ENCODE measurements at regions of chr21 and their contacts with region 1.

Region 1: GRCh38 chr21:37463083-37463801 is 96.7 kb downstream of the DYRK1A start:
- DNase-seq: peak; percentile 52
- H3K4me3 Mint-ChIP-seq: peak overlapping the region; percentile 70
- H3K27ac Mint-ChIP-seq: peak overlapping the region; percentile 18
- H3K4me1 Mint-ChIP-seq: peaks cover 40% of the 10 kb centered on the region
- H3K27me3 Mint-ChIP-seq: no peaks in the 10 kb centered on the region
- CTCF ChIP-seq: peak; percentile 24

Region 2: DNA sequence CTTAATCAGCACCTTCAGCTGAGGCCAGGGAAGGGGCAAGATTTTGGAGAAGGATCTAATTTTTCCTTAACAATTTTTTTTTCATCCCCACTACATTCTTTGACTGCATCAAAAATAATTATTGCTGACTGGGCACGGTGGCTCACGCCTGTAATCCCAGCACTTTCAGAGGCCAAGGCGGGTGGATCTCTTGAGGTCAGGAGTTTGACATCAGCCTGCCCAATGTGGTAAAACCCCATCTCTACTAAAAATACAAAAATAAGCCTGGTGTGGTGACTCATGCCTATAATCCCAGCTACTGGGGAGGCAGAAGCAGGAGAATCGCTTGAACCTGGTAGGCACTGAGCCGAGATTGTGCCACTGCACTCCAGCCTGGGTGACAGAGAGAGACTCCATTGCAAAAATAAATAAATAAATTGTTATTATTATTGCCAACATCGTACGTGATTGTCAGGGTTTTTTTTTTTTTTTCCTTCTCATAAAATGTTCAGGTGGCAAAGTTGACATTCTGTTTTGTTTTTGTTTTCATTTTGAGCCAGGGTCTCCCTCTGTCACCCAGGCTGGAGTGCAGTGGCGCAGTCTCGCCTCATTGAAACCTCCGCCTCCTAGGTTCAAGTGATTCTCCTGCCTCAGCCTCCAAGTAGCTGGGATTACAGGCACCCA is 1180.5 kb before region 1 on chr21:
- CTCF ChIA-PET with region 1: no interaction called
- POLR2A ChIA-PET with region 1: no interaction called
- intact Hi-C with region 1: no loop called
- DNase-seq: peak; percentile 3
- H3K4me3 Mint-ChIP-seq: no peak overlapping the region
- H3K27ac Mint-ChIP-seq: no peak overlapping the region
- H3K4me1 Mint-ChIP-seq: no peaks in the 10 kb centered on the region
- H3K27me3 Mint-ChIP-seq: no peaks in the 10 kb centered on the region
- CTCF ChIP-seq: no peak

Region 3: DNA sequence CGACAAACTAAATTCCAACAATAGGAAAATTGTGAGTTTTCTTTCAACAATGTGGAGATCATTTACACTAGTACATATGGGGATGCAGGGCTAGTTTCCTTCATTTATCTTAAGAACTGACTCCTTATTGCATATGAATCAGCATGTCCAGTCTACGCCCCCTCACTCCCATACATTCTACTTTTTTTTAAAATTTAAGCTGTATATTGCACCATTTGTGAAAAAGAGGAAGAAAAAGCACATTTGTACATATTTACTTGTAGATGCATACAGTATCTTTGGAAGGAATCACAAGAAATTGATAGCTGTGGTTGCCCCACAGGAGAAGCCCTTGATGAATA is 212.0 kb before region 1 on chr21:
- CTCF ChIA-PET with region 1: no interaction called
- POLR2A ChIA-PET with region 1: interaction called, 3 read pairs
- intact Hi-C with region 1: loop called (anchors 2 kb)
- DNase-seq: no peak
- H3K4me3 Mint-ChIP-seq: no peak overlapping the region
- H3K27ac Mint-ChIP-seq: no peak overlapping the region
- H3K4me1 Mint-ChIP-seq: peaks cover 17% of the 10 kb centered on the region
- H3K27me3 Mint-ChIP-seq: no peaks in the 10 kb centered on the region
- CTCF ChIP-seq: no peak

Region 4: DNA sequence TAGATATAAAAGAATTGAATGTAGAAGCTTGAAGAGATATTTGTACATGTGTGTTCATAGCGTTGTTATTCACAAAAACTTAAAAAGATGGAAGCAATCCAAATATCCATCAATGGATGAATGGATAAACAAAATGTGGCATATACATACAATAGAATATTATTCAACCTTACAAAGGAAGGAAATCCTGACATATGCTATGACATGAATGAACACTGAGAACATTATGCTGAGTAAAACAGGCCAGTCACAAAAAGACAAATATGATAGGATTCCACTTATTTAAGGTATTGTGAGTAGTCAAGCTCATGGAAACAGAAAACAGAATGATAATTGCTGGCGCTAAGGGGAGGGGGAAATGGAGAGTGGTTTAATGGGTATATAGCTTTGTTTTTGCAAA is 143.7 kb before region 1 on chr21:
- CTCF ChIA-PET with region 1: no interaction called
- POLR2A ChIA-PET with region 1: no interaction called
- intact Hi-C with region 1: no loop called
- DNase-seq: no peak
- H3K4me3 Mint-ChIP-seq: no peak overlapping the region
- H3K27ac Mint-ChIP-seq: no peak overlapping the region
- H3K4me1 Mint-ChIP-seq: no peaks in the 10 kb centered on the region
- H3K27me3 Mint-ChIP-seq: peaks cover 8% of the 10 kb centered on the region
- CTCF ChIP-seq: no peak

Region 5: DNA sequence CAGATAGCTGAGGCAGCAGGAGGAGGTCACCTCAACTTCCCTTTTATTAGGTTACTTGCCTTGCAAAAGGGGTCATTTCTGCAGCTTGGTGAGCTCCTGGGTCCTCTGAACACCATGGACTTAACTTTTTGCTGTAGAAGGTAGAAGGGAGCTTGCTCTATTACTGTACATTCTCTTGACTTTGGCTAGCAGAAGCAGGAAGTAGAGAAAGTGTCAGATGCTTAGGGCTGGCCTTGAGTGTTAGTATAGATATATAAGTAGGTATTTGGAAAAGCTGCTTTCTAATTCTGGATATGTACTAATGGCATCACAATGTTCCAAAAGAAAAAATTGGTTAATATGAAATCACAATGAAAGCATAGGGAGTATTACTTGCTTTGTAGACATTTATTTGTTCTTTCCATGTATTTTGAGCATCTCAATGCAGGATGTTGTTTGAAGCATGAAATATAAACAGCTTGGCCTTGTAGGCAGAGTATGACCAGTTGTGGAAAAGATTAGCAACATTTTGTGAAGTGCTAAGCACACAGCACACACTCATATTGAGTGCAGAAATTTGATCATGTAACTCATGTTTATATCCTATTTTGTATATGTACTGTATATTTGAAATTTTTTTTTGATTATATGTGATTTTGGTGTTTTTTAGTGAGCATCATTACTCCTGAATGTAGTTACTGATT is 12.1 kb after region 1 on chr21:
- CTCF ChIA-PET with region 1: interaction called, 17 read pairs
- POLR2A ChIA-PET with region 1: interaction called, 9 read pairs
- intact Hi-C with region 1: no loop called
- DNase-seq: no peak
- H3K4me3 Mint-ChIP-seq: no peak overlapping the region
- H3K27ac Mint-ChIP-seq: no peak overlapping the region
- H3K4me1 Mint-ChIP-seq: peaks cover 12% of the 10 kb centered on the region
- H3K27me3 Mint-ChIP-seq: no peaks in the 10 kb centered on the region
- CTCF ChIP-seq: no peak

Region 6: DNA sequence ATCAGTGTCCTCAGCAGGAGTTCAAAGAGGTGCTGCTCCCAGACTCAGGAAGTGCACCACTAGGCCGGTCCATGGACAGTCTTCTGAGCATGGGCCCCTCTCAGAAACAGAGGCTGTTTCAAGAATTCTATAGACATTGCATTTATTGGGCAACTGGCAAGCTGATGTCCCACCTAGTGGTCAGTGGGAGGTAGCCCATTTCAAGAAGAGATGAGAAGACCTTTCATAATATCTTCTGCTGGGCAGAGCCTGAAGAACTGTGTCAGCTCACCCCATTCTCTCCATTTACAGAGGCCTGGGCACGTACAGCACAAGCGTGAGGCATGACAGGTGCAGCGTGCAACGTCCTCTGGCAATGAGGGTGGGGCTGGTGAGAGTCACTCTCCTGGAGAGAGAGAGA is 119.3 kb after region 1 on chr21:
- CTCF ChIA-PET with region 1: no interaction called
- POLR2A ChIA-PET with region 1: no interaction called
- intact Hi-C with region 1: loop called (anchors 5 kb)
- DNase-seq: peak; percentile 68
- H3K4me3 Mint-ChIP-seq: no peak overlapping the region
- H3K27ac Mint-ChIP-seq: no peak overlapping the region
- H3K4me1 Mint-ChIP-seq: peaks cover 7% of the 10 kb centered on the region
- H3K27me3 Mint-ChIP-seq: no peaks in the 10 kb centered on the region
- CTCF ChIP-seq: peak; percentile 38